ENCODE measurements at regions of chr17 and their contacts with region 1.

Region 1: GRCh38 chr17:60720763-60721531 is 43.3 kb downstream of the BCAS3 start:
- DNase-seq: peak in 9 of 14 experiments; percentile 0 to 77 (median 13)
- ATAC-seq: peak; percentile 55
- H3K4me3 ChIP-seq: no peak overlapping the region
- H3K4me3 Mint-ChIP-seq: no peak overlapping the region
- H3K27ac ChIP-seq: no peak overlapping the region
- H3K27ac Mint-ChIP-seq: no peak overlapping the region
- H3K4me1 ChIP-seq: no peaks in the 10 kb centered on the region
- H3K4me1 Mint-ChIP-seq: peaks cover 3% of the 10 kb centered on the region
- H3K27me3 ChIP-seq: no peaks in the 10 kb centered on the region
- H3K27me3 Mint-ChIP-seq: no peaks in the 10 kb centered on the region
- CTCF ChIP-seq: peak; percentile 88

Region 2: DNA sequence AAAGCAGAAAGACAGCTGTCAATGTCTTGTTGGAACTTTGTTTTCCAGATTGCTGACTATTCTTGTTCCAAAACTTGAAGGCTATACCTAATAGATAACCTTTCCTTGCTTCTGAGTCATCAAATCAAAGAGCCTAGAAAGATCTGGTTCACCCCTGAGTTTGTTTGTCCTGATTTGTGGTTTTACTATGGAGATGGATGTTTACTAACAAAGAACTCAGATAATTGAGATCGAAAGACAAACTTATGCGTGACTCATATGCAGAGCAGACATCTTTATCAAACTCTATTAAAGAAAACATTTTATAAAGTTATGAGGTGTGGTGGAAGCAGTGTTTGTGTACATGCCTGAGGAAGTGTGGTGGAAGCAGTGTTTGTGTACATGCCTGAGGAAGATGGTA is 367.6 kb after region 1 on chr17:
- CTCF ChIA-PET with region 1: no interaction called
- POLR2A ChIA-PET with region 1: no interaction called
- intact Hi-C with region 1: no loop called
- DNase-seq: no peak
- ATAC-seq: no peak
- H3K4me3 ChIP-seq: no peak overlapping the region
- H3K4me3 Mint-ChIP-seq: no peak overlapping the region
- H3K27ac ChIP-seq: no peak overlapping the region
- H3K27ac Mint-ChIP-seq: no peak overlapping the region
- H3K4me1 ChIP-seq: no peaks in the 10 kb centered on the region
- H3K4me1 Mint-ChIP-seq: peaks cover 4% of the 10 kb centered on the region
- H3K27me3 ChIP-seq: no peaks in the 10 kb centered on the region
- H3K27me3 Mint-ChIP-seq: no peaks in the 10 kb centered on the region
- CTCF ChIP-seq: no peak

Region 3: DNA sequence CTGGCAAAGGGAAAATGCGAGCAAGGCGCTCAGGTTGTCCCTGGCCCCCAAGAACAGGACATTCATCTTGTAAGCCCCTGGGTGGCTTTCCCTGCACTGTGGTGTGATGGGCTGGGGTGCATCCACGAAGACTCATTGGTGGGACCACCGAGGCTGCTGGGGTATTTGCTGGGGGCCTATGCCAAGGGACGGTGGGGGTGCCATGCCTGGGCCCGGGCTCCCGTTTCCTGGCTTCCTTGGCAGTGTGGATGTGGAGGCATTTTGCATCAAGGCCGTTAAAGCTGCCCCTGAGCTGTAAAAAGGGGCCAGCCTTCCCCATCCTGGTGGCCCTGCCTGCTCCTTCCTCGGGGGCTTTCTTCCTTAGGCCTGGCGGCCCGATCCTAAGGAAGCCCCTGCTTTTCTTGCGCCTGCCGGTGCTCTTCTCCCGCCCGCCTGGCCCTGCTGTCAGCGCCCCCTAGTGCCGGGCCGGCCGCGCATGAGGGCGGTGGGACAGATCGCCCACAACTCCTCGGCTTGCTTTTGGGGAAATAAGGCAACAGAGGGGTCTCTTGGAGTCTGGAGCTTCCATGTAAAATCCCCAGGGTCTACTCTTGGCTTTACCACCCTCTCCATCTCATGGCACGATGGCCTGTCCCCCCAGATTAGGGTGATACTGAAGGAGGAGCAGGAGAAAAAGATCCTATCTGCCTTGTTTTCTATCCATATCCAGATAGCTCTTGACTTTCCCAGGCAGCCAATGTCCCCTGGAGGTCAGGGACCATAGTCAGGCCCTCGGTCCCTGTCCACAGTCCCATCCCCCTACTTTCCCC is 668.9 kb after region 1 on chr17:
- CTCF ChIA-PET with region 1: no interaction called
- POLR2A ChIA-PET with region 1: no interaction called
- intact Hi-C with region 1: loop called in 1 of 2 experiments (anchors 2 kb)
- DNase-seq: peak in 8 of 14 experiments; percentile 26 to 66 (median 51)
- ATAC-seq: peak; percentile 49
- H3K4me3 ChIP-seq: no peak overlapping the region
- H3K4me3 Mint-ChIP-seq: no peak overlapping the region
- H3K27ac ChIP-seq: no peak overlapping the region
- H3K27ac Mint-ChIP-seq: no peak overlapping the region
- H3K4me1 ChIP-seq: peaks cover 7% of the 10 kb centered on the region
- H3K4me1 Mint-ChIP-seq: no peaks in the 10 kb centered on the region
- H3K27me3 ChIP-seq: peaks cover 0 to 2% of the 10 kb centered on the region in 2 experiments
- H3K27me3 Mint-ChIP-seq: peaks cover 31% of the 10 kb centered on the region
- CTCF ChIP-seq: peak; percentile 71

Region 4: DNA sequence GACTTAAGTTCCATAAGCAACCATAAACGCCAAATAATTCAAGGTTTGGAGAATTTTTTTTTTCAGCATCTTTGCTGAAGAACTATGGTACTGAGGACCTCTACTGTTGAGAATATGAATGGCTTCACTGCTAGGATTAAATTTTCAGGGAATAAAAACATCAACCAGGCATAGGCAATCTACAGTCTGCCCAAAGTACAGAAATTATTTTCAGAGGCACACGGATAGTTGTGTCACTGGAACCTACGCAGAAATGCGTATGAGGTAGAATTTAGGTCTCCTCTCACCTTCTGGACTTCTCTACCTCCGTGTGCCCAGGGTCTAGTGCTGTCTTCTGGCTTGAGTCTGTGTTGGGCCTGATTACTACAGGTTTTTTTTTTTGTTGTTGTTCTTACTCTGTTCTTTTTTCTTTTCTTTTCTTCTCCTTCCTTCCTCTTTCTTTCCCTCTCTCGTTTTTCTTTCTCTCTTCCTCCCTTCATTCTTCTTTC is 830.4 kb after region 1 on chr17:
- CTCF ChIA-PET with region 1: no interaction called
- POLR2A ChIA-PET with region 1: no interaction called
- intact Hi-C with region 1: loop called in 1 of 2 experiments (anchors 2 kb)
- DNase-seq: peak in 3 of 14 experiments; percentile 11 to 23 (median 19)
- ATAC-seq: no peak
- H3K4me3 ChIP-seq: no peak overlapping the region
- H3K4me3 Mint-ChIP-seq: no peak overlapping the region
- H3K27ac ChIP-seq: no peak overlapping the region
- H3K27ac Mint-ChIP-seq: no peak overlapping the region
- H3K4me1 ChIP-seq: no peaks in the 10 kb centered on the region
- H3K4me1 Mint-ChIP-seq: no peaks in the 10 kb centered on the region
- H3K27me3 ChIP-seq: peaks cover 3 to 46% of the 10 kb centered on the region in 2 experiments
- H3K27me3 Mint-ChIP-seq: peaks cover 63% of the 10 kb centered on the region
- CTCF ChIP-seq: no peak

Region 5: DNA sequence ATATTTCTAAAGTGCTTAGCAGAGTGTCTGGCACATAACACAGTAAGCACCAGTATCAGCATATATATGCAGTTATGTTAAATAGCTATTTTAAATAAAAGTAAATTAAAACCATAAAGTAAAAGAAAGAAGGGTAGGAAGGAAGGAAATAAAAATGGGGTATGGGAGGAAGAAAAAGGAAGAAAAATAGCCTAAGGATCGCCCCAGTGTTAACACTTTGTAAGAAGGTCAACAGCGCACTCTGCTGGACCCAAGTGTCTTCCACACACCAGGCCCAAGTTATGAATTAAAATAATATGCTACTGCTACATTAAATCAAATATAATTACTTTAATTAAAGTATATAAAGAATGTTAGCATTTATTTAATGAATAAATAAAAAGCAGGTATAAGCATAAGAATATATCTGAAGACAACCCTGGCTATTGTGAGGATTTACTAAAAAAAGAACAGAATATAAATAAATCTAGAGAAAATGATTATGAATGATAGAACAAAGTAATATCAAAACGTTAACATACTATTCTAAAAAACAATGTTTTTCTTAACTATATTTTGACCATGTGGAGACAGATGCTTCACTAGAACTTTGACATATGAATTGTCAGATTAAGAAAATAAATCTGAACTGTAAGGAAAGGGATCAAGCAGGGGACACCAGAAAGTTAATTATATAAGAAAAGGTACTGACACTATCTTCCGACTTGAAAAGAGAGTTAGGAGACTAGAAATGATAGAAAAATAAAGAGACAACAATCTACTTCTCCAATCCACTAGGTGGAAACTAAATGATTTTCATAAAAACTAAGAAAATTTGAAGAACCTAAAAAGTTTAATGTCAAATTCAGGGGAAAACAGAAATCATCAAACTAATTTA is 1116.5 kb after region 1 on chr17:
- CTCF ChIA-PET with region 1: no interaction called
- POLR2A ChIA-PET with region 1: no interaction called
- intact Hi-C with region 1: loop called in 1 of 2 experiments (anchors 5 kb)
- DNase-seq: peak; percentile 9 to 74 (median 38)
- ATAC-seq: peak; percentile 43
- H3K4me3 ChIP-seq: no peak overlapping the region
- H3K4me3 Mint-ChIP-seq: no peak overlapping the region
- H3K27ac ChIP-seq: no peak overlapping the region
- H3K27ac Mint-ChIP-seq: no peak overlapping the region
- H3K4me1 ChIP-seq: no peaks in the 10 kb centered on the region
- H3K4me1 Mint-ChIP-seq: no peaks in the 10 kb centered on the region
- H3K27me3 ChIP-seq: no peaks in the 10 kb centered on the region
- H3K27me3 Mint-ChIP-seq: no peaks in the 10 kb centered on the region
- CTCF ChIP-seq: peak; percentile 65